A549 (cell line): ENCODE measurements at regions of chr19 and their contacts with region 1.

Region 1: GRCh38 chr19:38478273-38478967 is 44.9 kb downstream of the RYR1 start:
- DNase-seq: peak; percentile 79 to 90
- ATAC-seq: peak; percentile 83 to 91
- H3K4me3 ChIP-seq: no peak overlapping the region
- H3K27ac ChIP-seq: no peak overlapping the region
- H3K4me1 ChIP-seq: no peaks in the 10 kb centered on the region
- CTCF ChIP-seq: peak; percentile 65
- EP300 ChIP-seq: no peak
- POLR2A ChIP-seq: no peak
- RAD21 ChIP-seq: peak; percentile 75 to 92

Region 2: DNA sequence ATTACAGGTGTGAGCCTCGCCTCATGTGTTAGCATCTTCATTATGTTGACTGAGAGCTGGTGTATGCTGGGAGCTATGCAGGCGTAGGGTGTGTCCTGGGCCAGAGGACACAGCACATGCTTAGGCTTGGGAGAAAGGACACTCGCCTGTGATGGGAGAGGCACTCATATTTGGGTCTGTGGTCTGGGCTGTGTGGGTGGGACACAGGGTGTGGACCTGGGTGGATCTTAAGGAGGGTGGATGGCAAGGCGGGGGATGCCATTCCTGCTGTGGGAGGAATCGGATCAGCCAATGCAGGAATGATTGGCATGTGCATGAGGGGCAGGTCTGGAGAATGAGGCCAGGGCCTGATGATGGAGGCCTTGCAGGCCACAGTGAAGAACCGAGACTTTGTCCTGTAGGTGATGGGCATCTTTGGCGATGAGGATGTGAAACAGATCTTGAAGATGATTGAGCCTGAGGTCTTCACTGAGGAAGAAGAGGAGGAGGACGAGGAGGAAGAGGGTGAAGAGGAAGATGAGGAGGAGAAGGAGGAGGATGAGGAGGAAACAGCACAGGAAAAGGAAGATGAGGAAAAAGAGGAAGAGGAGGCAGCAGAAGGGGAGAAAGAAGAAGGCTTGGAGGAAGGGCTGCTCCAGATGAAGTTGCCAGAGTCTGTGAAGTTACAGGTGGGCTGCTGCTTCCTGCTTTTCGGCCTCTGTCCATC is 10.5 kb after region 1 on chr19:
- CTCF ChIA-PET with region 1: interaction called, 31 read pairs
- POLR2A ChIA-PET with region 1: no interaction called
- DNase-seq: no peak
- ATAC-seq: peak in 1 of 2 experiments; percentile 14; a peak in 1 of 6 replicates
- H3K4me3 ChIP-seq: no peak overlapping the region
- H3K27ac ChIP-seq: no peak overlapping the region
- H3K4me1 ChIP-seq: no peaks in the 10 kb centered on the region
- CTCF ChIP-seq: no peak
- EP300 ChIP-seq: no peak
- POLR2A ChIP-seq: no peak
- RAD21 ChIP-seq: no peak

Region 3: DNA sequence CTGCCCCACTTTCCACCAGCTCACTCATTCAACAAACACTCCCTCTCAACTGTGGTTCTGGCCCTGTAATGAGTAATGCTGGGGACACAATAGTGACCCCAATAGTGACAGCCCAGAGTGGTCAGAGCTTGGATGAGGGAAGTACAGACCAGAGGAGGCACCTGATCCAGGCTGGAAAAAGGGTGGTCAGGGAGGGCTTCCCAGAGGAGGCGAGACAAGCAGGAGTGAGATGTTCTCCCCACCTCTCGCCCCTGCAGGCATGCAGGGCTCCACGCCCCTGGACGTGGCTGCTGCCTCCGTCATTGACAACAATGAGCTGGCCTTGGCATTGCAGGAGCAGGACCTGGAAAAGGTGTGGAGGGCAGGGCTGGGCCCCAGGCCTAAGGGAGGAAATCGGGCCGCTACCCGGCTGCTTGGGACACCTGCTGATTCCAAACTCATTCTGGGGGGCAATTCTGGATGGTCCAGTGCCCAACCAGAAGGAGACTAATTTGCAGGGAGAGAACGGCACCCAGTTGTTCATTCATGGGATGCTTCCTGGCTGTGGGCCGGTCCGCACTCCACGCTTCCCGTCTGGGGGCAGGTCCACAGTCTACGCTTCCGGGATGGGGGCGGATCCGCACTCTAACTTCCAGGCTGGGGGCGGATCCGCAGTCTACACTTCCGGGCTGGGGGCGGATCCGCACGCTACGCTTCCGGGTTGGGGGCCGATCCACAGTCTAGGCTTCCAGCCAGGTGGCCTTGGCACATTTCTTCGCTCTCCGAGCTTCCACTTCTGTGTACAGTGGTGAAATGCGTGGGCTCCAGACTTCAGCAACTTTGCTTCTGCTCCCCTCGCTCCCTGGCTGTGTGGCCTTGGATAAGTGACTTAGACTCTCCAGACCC is 18.4 kb after region 1 on chr19:
- CTCF ChIA-PET with region 1: interaction called, 31 read pairs
- POLR2A ChIA-PET with region 1: no interaction called
- DNase-seq: no peak
- ATAC-seq: no peak
- H3K4me3 ChIP-seq: no peak overlapping the region
- H3K27ac ChIP-seq: no peak overlapping the region
- H3K4me1 ChIP-seq: no peaks in the 10 kb centered on the region
- CTCF ChIP-seq: no peak
- EP300 ChIP-seq: no peak
- POLR2A ChIP-seq: no peak
- RAD21 ChIP-seq: no peak

Region 4: DNA sequence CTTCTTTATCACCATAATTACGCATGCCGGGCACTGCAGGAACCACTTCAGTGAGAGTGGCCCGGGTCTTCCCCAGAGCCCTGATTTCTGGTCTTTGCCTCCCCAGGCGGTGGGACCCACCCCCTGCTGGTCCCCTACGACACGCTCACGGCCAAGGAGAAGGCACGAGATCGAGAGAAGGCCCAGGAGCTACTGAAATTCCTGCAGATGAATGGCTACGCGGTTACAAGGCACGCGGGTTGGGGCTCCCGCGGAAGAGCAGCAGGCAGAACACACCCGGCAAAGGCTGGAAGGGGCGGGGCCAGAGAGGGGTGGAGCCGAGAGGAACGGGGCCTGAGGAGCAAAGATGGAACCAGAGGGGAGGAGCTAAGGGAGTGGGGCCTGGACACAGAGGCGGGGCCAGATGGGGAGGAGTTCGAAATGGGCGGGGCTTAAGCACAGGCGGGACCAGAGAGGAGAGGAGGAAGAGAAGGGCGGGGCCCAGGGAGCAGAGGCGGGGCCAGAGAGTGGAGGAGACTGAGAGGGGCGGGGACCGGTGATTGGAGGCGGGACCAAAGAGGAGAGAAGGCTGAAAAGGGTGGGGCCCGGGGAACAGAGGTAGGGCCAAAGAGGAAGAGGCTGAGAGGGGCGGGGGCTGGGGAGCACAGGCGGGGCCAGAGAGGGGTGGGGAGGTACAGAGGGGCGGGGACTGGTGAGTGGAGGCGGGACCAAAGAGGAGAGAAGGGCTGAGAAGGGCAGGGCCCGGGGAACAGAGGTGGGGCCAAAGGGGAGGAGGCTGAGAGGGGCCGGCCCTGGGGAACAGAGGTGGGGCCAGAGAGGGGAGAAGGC is 28.5 kb after region 1 on chr19:
- CTCF ChIA-PET with region 1: interaction called, 28 read pairs
- POLR2A ChIA-PET with region 1: no interaction called
- DNase-seq: peak; percentile 100
- ATAC-seq: peak; percentile 81 to 92
- H3K4me3 ChIP-seq: peak overlapping the region; percentile 38
- H3K27ac ChIP-seq: peak overlapping the region; percentile 63 to 75
- H3K4me1 ChIP-seq: peaks cover 16% of the 10 kb centered on the region
- CTCF ChIP-seq: no peak
- EP300 ChIP-seq: no peak
- POLR2A ChIP-seq: peak; percentile 87
- RAD21 ChIP-seq: no peak

Region 5: GRCh38 chr19:38869856-38870607 is 391.6 kb after region 1 on chr19:
- CTCF ChIA-PET with region 1: interaction called, 14 read pairs
- POLR2A ChIA-PET with region 1: no interaction called
- DNase-seq: peak; percentile 89 to 93
- ATAC-seq: peak; percentile 90 to 94
- H3K4me3 ChIP-seq: peak overlapping the region; percentile 31
- H3K27ac ChIP-seq: peak overlapping the region; percentile 56 to 80
- H3K4me1 ChIP-seq: peaks cover 18% of the 10 kb centered on the region
- CTCF ChIP-seq: peak; percentile 99
- EP300 ChIP-seq: no peak
- POLR2A ChIP-seq: no peak; the same call in 1 of the 2 replicates
- RAD21 ChIP-seq: peak; percentile 73 to 88

Region 6: GRCh38 chr19:38917516-38918491 is 439.4 kb after region 1 on chr19:
- CTCF ChIA-PET with region 1: interaction called, 16 read pairs
- POLR2A ChIA-PET with region 1: no interaction called
- DNase-seq: peak; percentile 75 to 90
- ATAC-seq: peak; percentile 72 to 84
- H3K4me3 ChIP-seq: no peak overlapping the region
- H3K27ac ChIP-seq: peak overlapping the region in 1 of 2 experiments; percentile 14; a peak in 1 of 6 replicates
- H3K4me1 ChIP-seq: 0 out of 3 replicates have a peak, but pooled peaks cover 5% of the 10 kb centered on the region
- CTCF ChIP-seq: peak; percentile 49
- EP300 ChIP-seq: no peak
- POLR2A ChIP-seq: no peak
- RAD21 ChIP-seq: peak; percentile 48 to 59